Mammary epithelial cell (primary cell): ENCODE measurements at regions of chr17 and their contacts with region 1.

Region 1: DNA sequence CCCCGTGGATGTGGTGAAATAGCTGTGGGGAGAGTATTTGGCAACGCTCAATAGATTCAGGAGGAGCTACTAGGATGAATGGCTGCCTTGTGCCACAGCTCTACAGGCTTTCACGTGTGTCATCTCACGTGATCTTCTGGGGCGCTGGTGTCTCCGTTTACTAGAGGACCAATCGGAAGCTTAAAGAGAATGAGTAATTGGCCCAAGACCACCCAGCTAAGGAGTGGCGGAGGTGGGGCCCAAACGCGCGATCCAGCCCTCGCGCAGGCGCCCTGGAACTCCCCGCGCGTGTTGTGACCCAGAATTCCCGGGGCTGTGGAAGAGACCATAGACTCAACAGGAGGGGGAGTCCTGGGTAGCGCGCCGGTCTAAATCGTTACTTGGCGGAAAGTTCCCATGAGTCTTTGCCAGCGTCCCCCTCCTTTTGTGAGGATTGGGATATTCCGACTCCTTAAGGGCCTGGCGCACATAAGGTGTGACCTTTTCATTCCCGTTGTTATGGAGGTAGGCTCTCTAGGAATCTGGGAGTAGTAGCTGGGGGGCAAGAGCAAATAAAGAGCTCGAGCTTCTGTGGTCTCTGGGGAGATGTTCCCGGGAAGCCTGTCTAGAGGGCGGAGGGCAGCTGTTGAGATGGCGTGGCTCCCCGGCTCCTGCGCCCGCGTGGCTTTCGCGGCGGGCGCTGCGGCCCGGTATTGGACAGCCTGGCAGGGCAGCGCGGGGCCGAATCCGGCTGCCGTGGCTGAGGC is 23.4 kb downstream of the TRPV2 start:
- DNase-seq: peak; percentile 100
- H3K4me3 ChIP-seq: peak overlapping the region; percentile 90 to 98 (median 95)
- H3K27ac ChIP-seq: peak overlapping the region; percentile 85
- H3K4me1 ChIP-seq: peaks cover 29% of the 10 kb centered on the region
- H3K27me3 ChIP-seq: no peaks in the 10 kb centered on the region
- CTCF ChIP-seq: no peak

Region 2: GRCh38 chr17:16273499-16273898 is 165.2 kb before region 1 on chr17:
- CTCF ChIA-PET with region 1: no interaction called
- dilution Hi-C with region 1: no loop called
- in situ Hi-C with region 1: no loop called
- intact Hi-C with region 1: no loop called
- DNase-seq: peak; percentile 67
- H3K4me3 ChIP-seq: no peak overlapping the region
- H3K27ac ChIP-seq: no peak overlapping the region
- H3K4me1 ChIP-seq: peaks cover 15% of the 10 kb centered on the region
- H3K27me3 ChIP-seq: no peaks in the 10 kb centered on the region
- CTCF ChIP-seq: no peak

Region 3: DNA sequence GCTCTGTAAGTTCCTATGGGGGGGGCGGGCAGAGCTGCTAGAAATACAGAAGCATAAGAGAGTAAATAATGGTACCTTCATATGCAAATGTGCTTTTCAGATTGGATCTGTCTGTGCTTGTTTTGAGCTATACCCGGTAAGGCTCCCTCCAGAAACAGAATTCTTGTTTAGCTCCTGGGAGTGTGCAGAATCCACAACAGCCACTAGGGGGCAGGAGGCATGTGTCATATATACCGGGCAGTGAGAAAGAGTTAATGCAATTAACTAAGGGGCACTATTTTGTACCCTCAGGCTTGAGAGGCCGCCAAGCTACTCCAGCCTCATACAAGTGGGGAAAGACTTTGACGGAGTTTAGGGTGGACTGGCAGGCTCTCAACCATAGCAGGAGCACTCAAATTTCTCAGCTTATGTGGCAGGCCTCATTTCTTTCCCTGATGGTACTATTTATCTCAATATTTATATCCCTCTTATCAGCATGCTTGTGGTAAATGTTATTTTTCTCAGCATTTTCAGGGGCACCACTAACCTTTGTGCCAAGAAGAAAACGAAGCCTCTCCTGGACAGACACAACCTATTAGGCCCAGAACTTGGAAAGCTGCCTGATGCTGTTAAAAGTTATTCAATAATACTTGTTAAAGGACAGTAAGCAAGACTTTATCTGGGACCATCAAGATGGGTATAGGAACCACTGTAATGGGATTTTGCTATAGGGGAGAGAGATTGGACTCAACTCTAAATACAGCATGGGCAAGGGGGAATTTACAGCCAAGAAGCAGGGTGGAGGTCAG is 74.8 kb before region 1 on chr17:
- CTCF ChIA-PET with region 1: interaction called, 6 read pairs
- dilution Hi-C with region 1: no loop called
- in situ Hi-C with region 1: no loop called
- intact Hi-C with region 1: loop called (anchors 2 kb)
- DNase-seq: peak; percentile 55
- H3K4me3 ChIP-seq: no peak overlapping the region
- H3K27ac ChIP-seq: no peak overlapping the region
- H3K4me1 ChIP-seq: no peaks in the 10 kb centered on the region
- H3K27me3 ChIP-seq: no peaks in the 10 kb centered on the region
- CTCF ChIP-seq: peak; percentile 93 to 98

Region 4: GRCh38 chr17:16380640-16381495 is 57.9 kb before region 1 on chr17 and contains the start of gene UBB:
- CTCF ChIA-PET with region 1: no interaction called
- dilution Hi-C with region 1: no loop called
- in situ Hi-C with region 1: no loop called
- intact Hi-C with region 1: loop called (anchors 1 kb)
- DNase-seq: peak; percentile 97
- H3K4me3 ChIP-seq: peak within 1 kb of the TSS; percentile 64 to 78 (median 68)
- H3K27ac ChIP-seq: peak within 1 kb of the TSS; percentile 95
- H3K4me1 ChIP-seq: peaks cover 26% of the 10 kb centered on the region
- H3K27me3 ChIP-seq: no peaks in the 10 kb centered on the region
- CTCF ChIP-seq: no peak
- total RNA-seq, gene UBB: 633 to 696 TPM

Region 5: DNA sequence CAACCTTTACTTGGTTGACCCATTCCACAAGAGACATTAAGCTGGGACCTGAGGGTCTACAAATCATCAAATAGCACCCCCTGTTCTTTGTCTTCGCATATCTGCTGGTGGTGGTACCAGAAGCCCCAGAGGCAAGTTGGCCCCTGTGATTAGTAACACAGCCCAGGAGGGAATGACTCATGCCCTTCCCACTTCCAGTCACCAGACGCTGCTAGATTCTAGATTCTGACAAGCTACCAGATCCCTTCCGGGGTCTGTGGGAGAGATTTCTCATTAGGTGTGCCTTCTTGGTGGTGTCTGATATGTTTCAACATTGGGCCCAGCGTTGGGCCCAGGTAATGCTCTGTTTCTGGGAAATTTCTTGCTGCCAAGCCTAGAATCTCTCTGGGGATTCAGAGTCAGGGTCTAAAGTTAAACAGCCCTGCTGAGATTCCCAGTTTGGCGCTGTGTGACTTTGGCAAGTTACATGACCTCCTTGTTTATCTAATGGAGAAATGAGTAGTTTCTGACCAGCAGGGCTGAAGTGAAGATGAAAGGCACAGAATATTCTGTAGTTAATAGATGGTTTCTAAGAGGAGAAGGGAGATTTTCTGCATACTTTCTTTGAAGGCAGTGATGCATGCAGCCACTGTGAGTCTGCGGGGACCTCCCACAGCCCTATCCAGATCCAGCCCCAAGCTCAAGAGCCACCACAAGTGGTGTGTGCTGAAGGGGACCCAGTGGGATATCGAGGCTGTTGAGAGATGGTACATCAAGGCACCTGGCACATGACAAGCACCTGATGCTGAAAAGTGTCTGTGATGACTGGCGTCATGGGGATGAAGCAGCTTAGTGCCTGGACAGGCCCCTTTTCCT is 19.4 kb before region 1 on chr17:
- CTCF ChIA-PET with region 1: no interaction called
- dilution Hi-C with region 1: no loop called
- in situ Hi-C with region 1: no loop called
- intact Hi-C with region 1: loop called (anchors 1 kb)
- DNase-seq: peak; percentile 87
- H3K4me3 ChIP-seq: no peak overlapping the region
- H3K27ac ChIP-seq: no peak overlapping the region
- H3K4me1 ChIP-seq: peaks cover 31% of the 10 kb centered on the region
- H3K27me3 ChIP-seq: no peaks in the 10 kb centered on the region
- CTCF ChIP-seq: no peak

Region 6: DNA sequence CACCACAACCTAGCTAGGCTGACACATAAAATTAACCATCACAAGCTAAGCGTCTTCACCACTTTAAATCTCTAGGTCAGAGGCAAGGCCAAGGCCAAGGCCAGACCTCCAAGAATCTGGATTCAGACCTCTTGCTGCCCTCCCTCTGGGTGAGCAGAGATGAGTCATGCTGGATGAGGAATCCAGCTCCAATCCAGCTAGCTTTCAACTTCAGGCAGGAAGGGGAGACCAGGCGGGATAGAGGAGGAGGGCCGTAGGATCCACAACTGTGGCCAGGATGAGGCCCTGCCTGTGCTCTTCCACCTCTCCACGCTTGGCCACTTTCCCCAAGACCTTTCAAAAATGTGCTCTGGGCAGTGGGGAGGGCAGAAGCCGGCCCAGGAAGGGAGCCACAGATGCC is 38.5 kb after region 1 on chr17:
- CTCF ChIA-PET with region 1: no interaction called
- dilution Hi-C with region 1: loop called (anchors 5 kb)
- in situ Hi-C with region 1: no loop called
- intact Hi-C with region 1: no loop called
- DNase-seq: peak; percentile 35
- H3K4me3 ChIP-seq: no peak overlapping the region
- H3K27ac ChIP-seq: no peak overlapping the region
- H3K4me1 ChIP-seq: no peaks in the 10 kb centered on the region
- H3K27me3 ChIP-seq: peaks cover 2% of the 10 kb centered on the region
- CTCF ChIP-seq: no peak